HEK293 (cell line): ENCODE measurements at regions of chr1 and their contacts with region 1.

Region 1: DNA sequence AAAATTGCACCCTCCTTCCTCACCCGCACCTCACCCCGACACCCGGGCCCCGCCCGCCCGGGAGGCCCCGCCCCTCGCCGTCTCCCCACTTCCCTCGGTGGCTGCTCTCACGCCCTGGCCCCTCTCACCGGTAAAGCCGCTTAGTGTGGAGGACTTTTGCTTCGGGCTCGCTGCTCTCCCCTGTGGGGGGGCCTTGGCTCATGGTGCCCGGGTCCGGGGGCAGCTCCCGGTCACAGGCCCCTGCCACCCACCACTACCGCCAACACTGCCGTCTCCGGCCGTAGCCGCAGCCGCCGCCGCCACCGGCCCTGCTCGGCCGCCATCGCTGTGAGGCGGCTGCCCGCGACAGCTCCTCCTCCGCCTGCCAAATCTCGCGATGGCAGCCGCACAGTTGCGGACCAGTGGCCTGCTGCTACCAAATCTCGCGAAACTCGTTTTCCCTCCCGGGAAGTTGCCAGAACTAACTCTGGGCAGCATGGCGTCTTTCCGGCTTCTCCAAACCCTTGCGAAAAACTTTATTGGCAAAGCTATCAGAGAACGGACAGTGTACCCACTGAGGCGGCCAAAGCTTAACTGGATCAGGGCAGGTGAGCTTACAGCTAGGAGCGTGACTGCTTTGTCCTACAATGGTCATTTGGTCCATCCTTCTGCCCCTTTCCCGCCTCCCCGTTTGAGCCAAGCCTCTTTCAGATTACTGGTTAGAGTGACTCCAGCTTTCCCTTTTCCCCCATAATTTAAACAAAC is at the start of gene SMG5:
- H3K4me3 ChIP-seq: peak within 1 kb of the TSS; percentile 91
- H3K27ac ChIP-seq: peak within 1 kb of the TSS; percentile 67
- H3K4me1 ChIP-seq: peaks cover 4% of the 10 kb centered on the region; the same call in 1 of the 2 replicates
- CTCF ChIP-seq: no peak

Region 2: GRCh38 chr1:156295391-156295947 is 12.8 kb after region 1 on chr1 and contains the start of gene GLMP:
- CTCF ChIA-PET with region 1: no interaction called
- POLR2A ChIA-PET with region 1: interaction called, 19 read pairs
- H3K4me3 ChIP-seq: peak within 1 kb of the TSS; percentile 66
- H3K27ac ChIP-seq: no peak within 1 kb of the TSS; the same call in 1 of the 2 replicates
- H3K4me1 ChIP-seq: peaks cover 3% of the 10 kb centered on the region; the same call in 1 of the 2 replicates
- CTCF ChIP-seq: no peak